Activated CD8-positive, alpha-beta memory T cell treated with anti-CD3 and anti-CD28 coated beads, Interleukin-2, amount 10 ng/mL, durations not matched to agents 7 days and 5 days (primary cell): ENCODE measurements at regions of chr1 and their contacts with region 1.

Region 1: GRCh38 chr1:25520446-25521061 is 22.9 kb upstream of the LDLRAP1 start:
- DNase-seq: peak; percentile 76
- ATAC-seq: peak; percentile 72
- H3K4me3 Mint-ChIP-seq: no peak overlapping the region
- H3K27ac Mint-ChIP-seq: no peak overlapping the region
- H3K4me1 Mint-ChIP-seq: peaks cover 2% of the 10 kb centered on the region
- H3K27me3 Mint-ChIP-seq: no peaks in the 10 kb centered on the region

Region 2: GRCh38 chr1:25503551-25504426 is 16.8 kb before region 1 on chr1:
- CTCF ChIA-PET with region 1: interaction called, 16 read pairs
- DNase-seq: peak; percentile 66
- ATAC-seq: peak; percentile 75
- H3K4me3 Mint-ChIP-seq: no peak overlapping the region
- H3K27ac Mint-ChIP-seq: no peak overlapping the region
- H3K4me1 Mint-ChIP-seq: peaks cover 6% of the 10 kb centered on the region
- H3K27me3 Mint-ChIP-seq: peaks cover 7% of the 10 kb centered on the region

Region 3: GRCh38 chr1:25580927-25581326 is 60.4 kb after region 1 on chr1:
- CTCF ChIA-PET with region 1: no interaction called
- DNase-seq: no peak
- ATAC-seq: no peak
- H3K4me3 Mint-ChIP-seq: no peak overlapping the region
- H3K27ac Mint-ChIP-seq: no peak overlapping the region
- H3K4me1 Mint-ChIP-seq: no peaks in the 10 kb centered on the region
- H3K27me3 Mint-ChIP-seq: peaks cover 30% of the 10 kb centered on the region